PC-9 (cell line): ENCODE measurements at regions of chr3 and their contacts with region 1.

Region 1: GRCh38 chr3:123678108-123678511 is 93.3 kb upstream of the HACD2 start:
- DNase-seq: peak; percentile 47 to 48
- H3K4me3 ChIP-seq: no peak overlapping the region
- H3K27ac ChIP-seq: no peak overlapping the region
- H3K4me1 ChIP-seq: peaks cover 10% of the 10 kb centered on the region
- H3K27me3 ChIP-seq: peaks cover 23% of the 10 kb centered on the region; the same call in 1 of the 2 replicates
- CTCF ChIP-seq: no peak

Region 2: GRCh38 chr3:123307064-123307463 is 371.0 kb before region 1 on chr3:
- CTCF ChIA-PET with region 1: interaction called, 20 read pairs
- POLR2A ChIA-PET with region 1: no interaction called
- intact Hi-C with region 1: no loop called
- DNase-seq: peak in 1 of 2 experiments; percentile 12
- H3K4me3 ChIP-seq: no peak overlapping the region
- H3K27ac ChIP-seq: no peak overlapping the region
- H3K4me1 ChIP-seq: no peaks in the 10 kb centered on the region
- H3K27me3 ChIP-seq: no peaks in the 10 kb centered on the region
- CTCF ChIP-seq: no peak

Region 3: GRCh38 chr3:123816673-123817207 is 138.6 kb after region 1 on chr3:
- CTCF ChIA-PET with region 1: no interaction called
- POLR2A ChIA-PET with region 1: no interaction called
- intact Hi-C with region 1: no loop called
- DNase-seq: no peak
- H3K4me3 ChIP-seq: no peak overlapping the region
- H3K27ac ChIP-seq: no peak overlapping the region
- H3K4me1 ChIP-seq: peaks cover 23% of the 10 kb centered on the region
- H3K27me3 ChIP-seq: no peaks in the 10 kb centered on the region
- CTCF ChIP-seq: no peak

Region 4: GRCh38 chr3:124492811-124493210 is 814.7 kb after region 1 on chr3:
- CTCF ChIA-PET with region 1: no interaction called
- POLR2A ChIA-PET with region 1: no interaction called
- intact Hi-C with region 1: no loop called
- DNase-seq: peak; percentile 51 to 55
- H3K4me3 ChIP-seq: no peak overlapping the region
- H3K27ac ChIP-seq: no peak overlapping the region
- H3K4me1 ChIP-seq: no peaks in the 10 kb centered on the region
- H3K27me3 ChIP-seq: peaks cover 36% of the 10 kb centered on the region
- CTCF ChIP-seq: peak; percentile 67